ENCODE measurements at regions of chr20 and their contacts with region 1.

Region 1: GRCh38 chr20:44210422-44211176 is at the start of gene OSER1:
- ATAC-seq: peak; percentile 75 to 92 (median 88)
- H3K4me3 ChIP-seq: peak within 1 kb of the TSS; percentile 57 to 88 (median 72)
- H3K27ac ChIP-seq: peak within 1 kb of the TSS; percentile 81 to 92
- H3K4me1 ChIP-seq: peaks cover 17 to 38% of the 10 kb centered on the region in 2 donors
- total RNA-seq, gene OSER1: 34.0 to 50.6 (median 37.4) TPM

Region 2: DNA sequence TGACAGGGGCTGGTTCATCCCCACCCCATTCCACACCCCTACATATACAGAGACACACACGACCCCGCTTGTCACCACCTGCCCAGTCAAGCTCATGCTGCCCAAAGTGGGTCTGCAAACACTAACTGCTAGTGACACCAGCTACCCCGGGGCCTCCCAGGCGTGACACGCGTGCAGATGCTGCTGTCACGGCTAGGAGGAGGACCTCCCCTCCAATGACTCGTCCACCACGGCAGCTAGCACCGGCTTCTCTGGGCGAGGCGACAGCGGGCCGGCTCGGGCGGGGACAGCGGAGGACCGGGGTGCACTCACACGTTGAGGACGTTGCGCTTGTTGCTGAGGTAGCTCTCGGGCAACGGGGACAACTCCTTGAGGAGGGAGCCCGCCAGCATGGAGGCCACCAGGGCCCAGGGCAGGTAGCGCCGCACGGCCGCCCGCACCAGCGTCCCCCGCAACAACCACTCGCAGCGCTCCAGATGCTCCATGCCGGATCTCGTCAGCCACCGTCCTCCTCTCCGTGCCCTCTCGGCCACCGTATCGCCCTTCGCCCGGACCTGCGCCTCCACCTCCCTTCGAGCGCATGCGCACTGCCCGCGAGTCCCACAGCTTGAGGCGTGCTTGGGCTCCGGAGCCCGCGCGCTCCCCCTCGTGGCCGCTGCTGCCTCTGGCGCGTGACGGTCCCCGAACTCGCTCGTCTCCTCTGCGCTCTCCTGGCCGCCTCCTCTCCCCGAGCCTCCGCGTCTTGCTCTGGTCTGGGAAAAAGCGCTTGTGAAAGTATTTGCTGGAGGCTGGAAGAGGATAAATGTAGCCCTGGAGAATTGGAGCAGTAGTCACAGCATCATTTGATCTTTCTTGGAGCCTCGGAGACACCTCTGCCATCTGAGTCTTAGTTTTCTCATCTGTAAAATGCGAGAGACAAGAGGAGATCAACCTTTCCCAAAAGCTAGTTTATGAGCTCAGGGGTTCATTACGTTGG is 100.4 kb after region 1 on chr20 and contains the start of gene FITM2:
- in situ Hi-C with region 1: loop called in 5 of 9 experiments (anchors 10 to 25 kb)
- ATAC-seq: peak; percentile 87 to 96 (median 92)
- H3K4me3 ChIP-seq: peak within 1 kb of the TSS; percentile 58 to 88 (median 61)
- H3K27ac ChIP-seq: peak within 1 kb of the TSS; percentile 57 to 64
- H3K4me1 ChIP-seq: peaks cover 6 to 7% of the 10 kb centered on the region in 2 donors
- total RNA-seq, gene FITM2: 3.7 to 13.5 (median 5.4) TPM

Region 3: GRCh38 chr20:44388466-44389023 is 177.9 kb after region 1 on chr20:
- in situ Hi-C with region 1: loop called in 1 of 9 experiments (anchors 10 kb)
- ATAC-seq: peak in 6 of 8 experiments; percentile 32 to 95 (median 76)
- H3K4me3 ChIP-seq: no peak overlapping the region
- H3K27ac ChIP-seq: no peak overlapping the region
- H3K4me1 ChIP-seq: no peaks in the 10 kb centered on the region

Region 4: GRCh38 chr20:44460795-44461141 is 250.2 kb after region 1 on chr20:
- in situ Hi-C with region 1: loop called in 3 of 9 experiments (anchors 10 to 25 kb)
- ATAC-seq: peak in 4 of 8 experiments; percentile 49 to 77 (median 71)
- H3K4me3 ChIP-seq: no peak overlapping the region
- H3K27ac ChIP-seq: no peak overlapping the region
- H3K4me1 ChIP-seq: no peaks in the 10 kb centered on the region

Measured in motor neuron (in vitro differentiated cells).